A673 (cell line): ENCODE measurements at regions of chr1 and their contacts with region 1.

Region 1: DNA sequence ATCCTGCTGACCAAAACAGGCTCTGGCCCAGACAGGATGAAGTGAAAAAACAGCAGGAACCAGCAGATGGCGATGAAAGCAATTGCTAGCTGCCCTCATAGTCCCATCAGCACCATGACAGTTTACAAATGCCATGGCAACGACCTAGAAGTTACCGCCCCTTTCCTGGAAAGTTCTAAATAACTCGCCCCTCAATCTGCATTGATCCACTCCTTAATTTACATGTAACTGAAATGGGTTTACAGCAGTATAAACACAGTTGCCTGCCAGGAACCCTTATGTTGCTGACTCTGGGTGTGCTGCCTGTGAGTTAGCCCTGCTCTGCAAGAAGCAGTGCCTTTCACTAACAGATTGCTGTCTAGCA is 65.5 kb upstream of the CR1L start:
- DNase-seq: peak; percentile 62
- H3K4me3 ChIP-seq: no peak overlapping the region
- H3K27ac ChIP-seq: no peak overlapping the region
- H3K4me1 ChIP-seq: no peaks in the 10 kb centered on the region
- H3K27me3 ChIP-seq: peaks cover 20% of the 10 kb centered on the region
- CTCF ChIP-seq: peak; percentile 63

Region 2: GRCh38 chr1:207633204-207633603 is 53.8 kb after region 1 on chr1:
- CTCF ChIA-PET with region 1: interaction called, 12 read pairs
- POLR2A ChIA-PET with region 1: no interaction called
- intact Hi-C with region 1: no loop called
- DNase-seq: no peak
- H3K4me3 ChIP-seq: no peak overlapping the region
- H3K27ac ChIP-seq: no peak overlapping the region
- H3K4me1 ChIP-seq: no peaks in the 10 kb centered on the region
- H3K27me3 ChIP-seq: no peaks in the 10 kb centered on the region
- CTCF ChIP-seq: no peak